ENCODE measurements at regions of chr4 and their contacts with region 1.

Region 1: GRCh38 chr4:79917246-79917645 is 155.8 kb downstream of the ANTXR2 start:
- DNase-seq: peak; percentile 43
- ATAC-seq: peak; percentile 91
- H3K4me3 ChIP-seq: no peak overlapping the region
- H3K27ac ChIP-seq: no peak overlapping the region
- H3K4me1 ChIP-seq: no peaks in the 10 kb centered on the region
- H3K27me3 ChIP-seq: no peaks in the 10 kb centered on the region
- CTCF ChIP-seq: peak; percentile 69
- EP300 ChIP-seq: no peak
- POLR2A ChIP-seq: no peak
- RAD21 ChIP-seq: no peak

Region 2: DNA sequence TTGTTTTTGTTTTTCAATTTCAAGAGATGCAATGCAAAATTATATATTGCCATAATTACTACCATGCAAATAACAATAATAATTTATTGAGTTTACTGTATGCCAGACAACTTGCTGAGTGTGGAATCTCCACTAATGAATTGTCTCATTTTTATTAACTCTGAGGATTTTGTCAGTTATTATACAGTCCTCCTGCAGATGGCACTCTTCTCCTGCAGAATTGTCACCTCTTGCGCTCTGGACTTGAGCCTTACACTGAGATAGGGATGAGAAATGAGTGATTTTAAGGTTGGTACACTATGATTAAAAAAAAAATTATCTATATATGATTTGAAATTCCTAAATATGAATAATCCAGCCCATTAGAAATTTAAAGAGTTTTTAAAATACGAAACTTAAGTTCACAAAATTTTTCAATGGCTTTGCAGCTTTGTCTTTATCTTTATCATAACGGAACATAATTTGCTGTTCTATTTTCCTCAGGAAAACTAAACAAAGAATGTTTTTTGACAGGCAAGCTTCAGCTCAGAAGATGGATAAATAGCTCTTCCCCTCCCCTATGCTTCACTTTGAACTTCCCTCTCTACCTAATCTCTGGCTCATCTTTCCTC is 965.3 kb before region 1 on chr4:
- CTCF ChIA-PET with region 1: no interaction called
- POLR2A ChIA-PET with region 1: no interaction called
- in situ Hi-C with region 1: no loop called
- intact Hi-C with region 1: loop called (anchors 10 kb)
- DNase-seq: peak; percentile 33
- ATAC-seq: peak; percentile 75
- H3K4me3 ChIP-seq: no peak overlapping the region
- H3K27ac ChIP-seq: no peak overlapping the region
- H3K4me1 ChIP-seq: no peaks in the 10 kb centered on the region
- H3K27me3 ChIP-seq: 0 out of 5 replicates have a peak, but pooled peaks cover 0 to 8% of the 10 kb centered on the region in 2 experiments
- CTCF ChIP-seq: peak; percentile 75
- EP300 ChIP-seq: no peak
- POLR2A ChIP-seq: no peak
- RAD21 ChIP-seq: no peak

Region 3: GRCh38 chr4:79893456-79893855 is 23.8 kb before region 1 on chr4:
- CTCF ChIA-PET with region 1: no interaction called
- POLR2A ChIA-PET with region 1: no interaction called
- in situ Hi-C with region 1: no loop called
- intact Hi-C with region 1: no loop called
- DNase-seq: no peak
- ATAC-seq: no peak
- H3K4me3 ChIP-seq: no peak overlapping the region
- H3K27ac ChIP-seq: no peak overlapping the region
- H3K4me1 ChIP-seq: no peaks in the 10 kb centered on the region
- H3K27me3 ChIP-seq: no peaks in the 10 kb centered on the region
- CTCF ChIP-seq: no peak
- EP300 ChIP-seq: no peak
- POLR2A ChIP-seq: no peak
- RAD21 ChIP-seq: no peak

Region 4: DNA sequence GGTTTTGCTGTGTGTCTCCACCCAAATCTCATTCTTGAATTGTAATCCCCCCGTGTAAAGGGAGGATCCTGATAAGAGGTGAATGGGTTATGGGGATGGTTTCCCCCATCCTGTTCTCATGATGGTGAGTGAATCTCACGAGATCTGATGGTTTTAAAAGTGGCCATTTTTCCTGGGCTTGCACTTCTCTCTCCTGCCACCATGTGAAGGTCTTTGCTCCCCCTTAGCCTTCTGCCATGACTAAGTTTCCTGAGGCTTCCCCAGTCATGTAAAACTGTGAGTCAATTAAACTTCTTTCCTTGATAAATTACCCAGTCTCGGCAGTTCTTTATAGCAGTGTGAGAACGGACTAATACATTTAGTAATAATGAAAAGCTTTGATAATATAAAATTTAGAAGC is 108.9 kb after region 1 on chr4:
- CTCF ChIA-PET with region 1: no interaction called
- POLR2A ChIA-PET with region 1: no interaction called
- in situ Hi-C with region 1: no loop called
- intact Hi-C with region 1: loop called (anchors 1 kb)
- DNase-seq: no peak
- ATAC-seq: peak; percentile 52; the same call in 1 of the 3 replicates
- H3K4me3 ChIP-seq: no peak overlapping the region
- H3K27ac ChIP-seq: no peak overlapping the region
- H3K4me1 ChIP-seq: no peaks in the 10 kb centered on the region
- H3K27me3 ChIP-seq: no peaks in the 10 kb centered on the region
- CTCF ChIP-seq: no peak
- EP300 ChIP-seq: no peak
- POLR2A ChIP-seq: no peak
- RAD21 ChIP-seq: no peak

Region 5: GRCh38 chr4:80045786-80046185 is 128.5 kb after region 1 on chr4:
- CTCF ChIA-PET with region 1: no interaction called
- POLR2A ChIA-PET with region 1: no interaction called
- in situ Hi-C with region 1: no loop called
- intact Hi-C with region 1: no loop called
- DNase-seq: no peak
- ATAC-seq: no peak
- H3K4me3 ChIP-seq: no peak overlapping the region
- H3K27ac ChIP-seq: no peak overlapping the region
- H3K4me1 ChIP-seq: no peaks in the 10 kb centered on the region
- H3K27me3 ChIP-seq: no peaks in the 10 kb centered on the region
- CTCF ChIP-seq: no peak
- EP300 ChIP-seq: no peak
- POLR2A ChIP-seq: no peak
- RAD21 ChIP-seq: no peak

Region 6: GRCh38 chr4:80072744-80073472 is 155.7 kb after region 1 on chr4 and contains the start of gene ANTXR2:
- CTCF ChIA-PET with region 1: no interaction called
- POLR2A ChIA-PET with region 1: no interaction called
- in situ Hi-C with region 1: loop called (anchors 10 kb)
- intact Hi-C with region 1: loop called (anchors 1 kb)
- DNase-seq: peak; percentile 70
- ATAC-seq: peak; percentile 97
- H3K4me3 ChIP-seq: peak within 1 kb of the TSS; percentile 85 to 90 (median 90)
- H3K27ac ChIP-seq: peak within 1 kb of the TSS; percentile 70
- H3K4me1 ChIP-seq: peaks cover 33% of the 10 kb centered on the region
- H3K27me3 ChIP-seq: no peaks in the 10 kb centered on the region
- CTCF ChIP-seq: no peak
- EP300 ChIP-seq: no peak
- POLR2A ChIP-seq: peak; percentile 50 to 91
- RAD21 ChIP-seq: peak; percentile 24; the same call in 1 of the 2 replicates
- total RNA-seq, gene ANTXR2: 8.4 and 14.5 TPM in 2 replicates

Region 7: DNA sequence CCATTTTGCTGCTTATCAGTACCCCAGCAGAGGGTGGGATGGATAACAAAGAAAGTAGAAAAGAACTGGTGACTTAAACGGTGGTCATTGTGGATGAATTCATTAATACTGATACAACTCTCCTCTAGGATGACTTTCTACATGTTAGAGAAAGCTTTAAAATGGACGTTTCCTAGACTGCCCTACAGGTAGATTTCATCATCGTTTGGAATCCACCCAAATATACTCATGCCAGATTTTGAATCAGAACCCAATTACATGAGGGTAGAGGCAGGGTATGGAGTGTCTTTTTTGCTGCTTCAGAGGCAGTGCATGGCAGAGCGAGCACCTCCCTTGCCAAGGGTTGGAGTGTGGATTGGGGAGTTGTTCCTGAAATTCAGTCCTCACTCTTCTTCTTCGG is 169.1 kb after region 1 on chr4:
- CTCF ChIA-PET with region 1: no interaction called
- POLR2A ChIA-PET with region 1: no interaction called
- in situ Hi-C with region 1: no loop called
- intact Hi-C with region 1: no loop called
- DNase-seq: no peak
- ATAC-seq: no peak
- H3K4me3 ChIP-seq: no peak overlapping the region
- H3K27ac ChIP-seq: no peak overlapping the region
- H3K4me1 ChIP-seq: no peaks in the 10 kb centered on the region
- H3K27me3 ChIP-seq: no peaks in the 10 kb centered on the region; a peak in 1 of 5 replicates
- CTCF ChIP-seq: no peak
- EP300 ChIP-seq: no peak
- POLR2A ChIP-seq: no peak
- RAD21 ChIP-seq: no peak

Region 8: DNA sequence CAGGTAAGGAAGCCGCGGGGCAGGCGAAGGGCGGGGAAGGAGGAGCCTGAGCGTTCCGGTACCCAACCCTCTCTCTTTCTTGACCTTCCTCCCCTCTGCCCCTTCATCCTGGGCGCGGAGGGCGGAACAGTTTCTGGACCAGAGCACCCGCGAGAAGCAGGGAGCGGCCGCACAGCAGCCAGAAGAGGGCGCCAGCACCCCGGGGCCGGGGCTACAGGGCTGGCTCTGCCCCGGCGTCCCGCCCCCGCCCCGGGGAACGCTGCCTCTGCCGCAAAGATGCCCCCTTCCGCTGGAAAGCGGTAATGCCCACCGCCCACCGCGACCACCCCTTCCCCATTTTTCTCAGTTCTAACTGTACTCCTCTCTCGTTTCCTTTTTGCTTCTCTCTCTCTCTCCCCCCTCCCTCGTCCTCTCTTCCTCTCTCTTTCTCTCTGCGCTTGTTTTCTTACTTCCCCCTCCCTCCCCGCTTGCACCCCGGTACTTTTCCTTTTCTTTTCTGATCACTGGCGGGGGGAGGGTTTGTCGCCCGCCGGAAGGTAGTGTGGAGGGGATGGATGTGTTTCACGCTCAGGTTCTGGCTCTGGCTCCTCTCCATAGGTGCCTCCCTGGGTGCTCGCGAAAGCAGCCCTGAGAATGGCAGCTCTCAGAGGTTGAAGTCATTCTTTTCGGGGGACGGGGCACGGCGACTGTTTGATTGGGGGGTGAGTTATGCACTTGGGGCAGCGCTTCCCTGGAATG is 267.0 kb after region 1 on chr4:
- CTCF ChIA-PET with region 1: interaction called, 4 read pairs
- POLR2A ChIA-PET with region 1: no interaction called
- in situ Hi-C with region 1: no loop called
- intact Hi-C with region 1: loop called (anchors 1 kb)
- DNase-seq: peak; percentile 32
- ATAC-seq: peak; percentile 99
- H3K4me3 ChIP-seq: peak overlapping the region; percentile 45 to 75 (median 53)
- H3K27ac ChIP-seq: no peak overlapping the region
- H3K4me1 ChIP-seq: peaks cover 7% of the 10 kb centered on the region; the same call in 1 of the 2 replicates
- H3K27me3 ChIP-seq: peaks cover 4 to 59% of the 10 kb centered on the region in 2 experiments
- CTCF ChIP-seq: peak; percentile 85
- EP300 ChIP-seq: no peak
- POLR2A ChIP-seq: no peak
- RAD21 ChIP-seq: peak; percentile 75

Region 9: GRCh38 chr4:80202190-80202711 is 285.0 kb after region 1 on chr4:
- CTCF ChIA-PET with region 1: no interaction called
- POLR2A ChIA-PET with region 1: no interaction called
- in situ Hi-C with region 1: loop called (anchors 25 kb)
- intact Hi-C with region 1: no loop called
- DNase-seq: no peak
- ATAC-seq: no peak
- H3K4me3 ChIP-seq: no peak overlapping the region
- H3K27ac ChIP-seq: no peak overlapping the region
- H3K4me1 ChIP-seq: no peaks in the 10 kb centered on the region
- H3K27me3 ChIP-seq: peaks cover 1 to 22% of the 10 kb centered on the region in 2 experiments; a peak in 4 of 5 replicates
- CTCF ChIP-seq: no peak
- EP300 ChIP-seq: no peak
- POLR2A ChIP-seq: no peak
- RAD21 ChIP-seq: no peak

Region 10: DNA sequence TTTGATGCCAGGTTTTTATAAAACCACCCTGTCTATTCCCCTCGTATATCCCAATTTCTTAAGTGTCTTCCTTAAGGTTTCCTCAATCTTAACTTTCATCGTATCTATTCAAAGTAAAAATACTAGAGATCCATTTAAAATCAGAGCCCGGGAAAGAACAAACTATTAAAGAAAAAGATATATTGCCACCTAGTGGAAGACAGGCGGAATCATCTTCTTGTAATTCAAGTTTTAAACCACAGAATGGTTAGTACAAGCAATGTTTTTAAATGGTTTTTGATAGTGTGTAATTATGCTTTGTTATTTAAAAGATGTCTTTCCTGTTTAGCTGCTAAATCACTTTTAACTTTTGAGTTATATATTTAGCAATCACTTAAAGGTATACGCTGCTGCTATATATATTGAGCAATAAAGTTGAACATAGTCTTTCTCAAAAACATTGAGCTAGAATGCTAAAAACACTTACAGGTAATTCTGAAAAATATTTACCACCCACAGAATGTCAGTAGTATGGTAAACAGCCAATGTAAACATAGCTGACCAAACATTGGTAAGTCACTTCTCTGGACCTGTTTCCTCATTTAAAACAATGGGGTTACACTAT is 298.3 kb after region 1 on chr4:
- CTCF ChIA-PET with region 1: interaction called, 14 read pairs
- POLR2A ChIA-PET with region 1: no interaction called
- in situ Hi-C with region 1: loop called (anchors 25 kb)
- intact Hi-C with region 1: loop called (anchors 1 kb)
- DNase-seq: peak; percentile 1
- ATAC-seq: no peak
- H3K4me3 ChIP-seq: no peak overlapping the region
- H3K27ac ChIP-seq: no peak overlapping the region
- H3K4me1 ChIP-seq: no peaks in the 10 kb centered on the region
- H3K27me3 ChIP-seq: no peaks in the 10 kb centered on the region
- CTCF ChIP-seq: peak; percentile 54
- EP300 ChIP-seq: no peak
- POLR2A ChIP-seq: no peak
- RAD21 ChIP-seq: no peak